SK-N-SH (cell line): ENCODE measurements at regions of chr1 and their contacts with region 1.

Region 1: GRCh38 chr1:31789259-31790065 is 25.3 kb upstream of the ADGRB2 start:
- DNase-seq: peak; percentile 97
- H3K4me3 ChIP-seq: peak overlapping the region; percentile 67 to 76
- H3K27ac ChIP-seq: peak overlapping the region; percentile 70 to 94; a peak in 3 of 4 replicates
- H3K4me1 ChIP-seq: peaks cover 4 to 53% of the 10 kb centered on the region in 2 experiments; a peak in 2 of 4 replicates
- H3K27me3 ChIP-seq: no peaks in the 10 kb centered on the region
- CTCF ChIP-seq: peak; percentile 82
- EP300 ChIP-seq: no peak
- RAD21 ChIP-seq: peak; percentile 96

Region 2: GRCh38 chr1:31663622-31664452 is 125.6 kb before region 1 on chr1:
- CTCF ChIA-PET with region 1: interaction called, 110 read pairs
- POLR2A ChIA-PET with region 1: interaction called, 3 read pairs
- DNase-seq: peak; percentile 93
- H3K4me3 ChIP-seq: no peak overlapping the region; a peak in 1 of 4 replicates
- H3K27ac ChIP-seq: no peak overlapping the region
- H3K4me1 ChIP-seq: peaks cover 7 to 20% of the 10 kb centered on the region in 2 experiments; a peak in 2 of 4 replicates
- H3K27me3 ChIP-seq: no peaks in the 10 kb centered on the region
- CTCF ChIP-seq: peak; percentile 90
- EP300 ChIP-seq: no peak
- RAD21 ChIP-seq: peak; percentile 94

Region 3: GRCh38 chr1:31733389-31734219 is 55.9 kb before region 1 on chr1:
- CTCF ChIA-PET with region 1: interaction called, 12 read pairs
- POLR2A ChIA-PET with region 1: no interaction called
- DNase-seq: peak; percentile 89
- H3K4me3 ChIP-seq: no peak overlapping the region
- H3K27ac ChIP-seq: peak overlapping the region in 1 of 2 experiments; percentile 75; a peak in 2 of 4 replicates
- H3K4me1 ChIP-seq: peaks cover 8 to 20% of the 10 kb centered on the region in 2 experiments; a peak in 2 of 4 replicates
- H3K27me3 ChIP-seq: no peaks in the 10 kb centered on the region
- CTCF ChIP-seq: no peak
- EP300 ChIP-seq: no peak
- RAD21 ChIP-seq: no peak

Region 4: DNA sequence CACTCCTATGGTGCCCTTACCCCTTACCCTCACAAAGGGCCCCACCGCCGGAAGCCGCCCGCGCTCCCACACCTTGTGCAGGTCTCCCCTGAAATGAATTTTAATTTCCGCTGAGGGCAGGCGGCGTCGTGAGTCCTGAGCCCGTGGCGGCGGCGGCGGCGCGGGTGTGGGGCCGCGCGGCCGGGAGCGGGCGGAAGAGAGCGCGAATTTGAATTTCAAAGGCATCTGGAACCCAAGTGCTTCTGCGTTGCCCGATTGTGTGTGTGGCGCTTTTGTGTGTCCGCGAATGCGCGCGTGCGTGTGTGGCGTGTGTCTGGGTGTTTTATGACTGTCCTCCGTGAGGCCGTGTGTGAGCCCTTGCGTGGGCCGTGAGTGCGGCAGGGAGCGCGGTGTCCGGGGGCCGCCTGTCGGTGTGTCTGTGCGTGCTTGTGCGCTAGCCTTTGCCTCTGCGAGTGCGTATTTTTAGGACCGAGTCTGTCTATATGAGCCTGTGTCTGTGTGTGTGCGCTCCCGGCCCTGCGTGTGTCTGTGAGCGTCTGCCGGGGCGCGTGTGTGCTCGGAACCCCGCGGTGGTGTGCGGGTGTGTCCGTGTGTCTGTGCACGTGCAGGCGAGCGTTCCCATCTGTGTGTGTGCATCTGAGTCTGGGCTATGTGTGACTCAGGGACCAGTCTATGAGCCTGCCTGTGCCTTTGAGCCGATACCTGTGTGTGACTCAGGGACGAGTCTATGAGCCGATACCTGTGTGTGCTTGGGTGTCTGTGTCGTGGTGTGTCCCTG is 17.4 kb before region 1 on chr1:
- CTCF ChIA-PET with region 1: interaction called, 707 read pairs
- POLR2A ChIA-PET with region 1: interaction called, 67 read pairs
- DNase-seq: no peak
- H3K4me3 ChIP-seq: no peak overlapping the region
- H3K27ac ChIP-seq: peak overlapping the region in 1 of 2 experiments; percentile 97; a peak in 1 of 4 replicates
- H3K4me1 ChIP-seq: peaks cover 0 to 79% of the 10 kb centered on the region in 2 experiments; a peak in 3 of 4 replicates
- H3K27me3 ChIP-seq: no peaks in the 10 kb centered on the region
- CTCF ChIP-seq: no peak
- EP300 ChIP-seq: no peak
- RAD21 ChIP-seq: no peak

Region 5: DNA sequence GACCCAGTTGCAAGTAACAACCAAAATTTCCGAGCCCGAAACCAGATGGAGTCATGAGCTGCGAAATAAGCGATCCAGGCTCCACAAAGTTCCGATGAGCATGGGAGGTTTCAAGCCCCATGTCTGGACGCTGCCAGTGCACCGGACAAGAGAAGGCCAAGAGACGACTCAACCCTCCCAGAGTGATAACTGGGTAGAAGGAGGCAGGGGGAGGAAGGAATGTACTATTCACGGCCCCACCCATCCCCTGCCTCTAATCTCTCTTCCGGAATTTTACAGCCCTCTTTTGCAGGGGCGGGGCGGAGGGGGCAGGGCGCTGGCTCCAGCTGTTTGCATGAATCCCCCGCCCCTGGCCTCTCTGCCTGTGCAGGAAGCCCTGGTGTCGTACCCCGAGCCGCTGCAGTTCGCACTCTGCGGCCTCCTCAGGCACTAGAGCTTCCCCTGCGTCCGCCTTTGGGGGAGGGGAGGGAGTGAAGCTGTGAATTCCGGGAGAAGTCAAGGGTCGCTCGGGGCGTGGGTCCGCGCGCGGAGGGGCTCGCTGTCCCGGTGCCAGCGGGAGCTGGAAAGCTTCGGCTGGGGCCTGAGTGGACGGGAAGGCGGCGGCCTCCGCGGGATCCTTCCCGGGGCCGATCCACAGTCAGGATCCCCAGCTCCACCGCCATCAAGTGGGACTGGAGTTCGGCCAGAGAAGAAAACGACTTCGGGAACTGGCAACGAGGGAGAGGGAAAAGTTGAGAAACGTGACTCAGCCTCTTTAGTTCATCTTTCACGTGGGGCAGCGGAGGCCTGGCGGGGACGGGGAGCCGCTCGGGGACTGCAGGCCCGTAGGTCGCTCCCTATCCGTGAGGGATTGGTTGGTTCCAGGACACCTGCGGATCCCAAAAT is 155.0 kb after region 1 on chr1:
- CTCF ChIA-PET with region 1: interaction called, 10 read pairs
- POLR2A ChIA-PET with region 1: no interaction called
- DNase-seq: no peak
- H3K4me3 ChIP-seq: no peak overlapping the region
- H3K27ac ChIP-seq: no peak overlapping the region
- H3K4me1 ChIP-seq: peaks cover 0 to 4% of the 10 kb centered on the region in 2 experiments; a peak in 2 of 4 replicates
- H3K27me3 ChIP-seq: no peaks in the 10 kb centered on the region
- CTCF ChIP-seq: no peak
- EP300 ChIP-seq: no peak
- RAD21 ChIP-seq: no peak